CD4-positive, alpha-beta T cell (primary cell): ENCODE measurements at regions of chr2 and their contacts with region 1.

Region 1: DNA sequence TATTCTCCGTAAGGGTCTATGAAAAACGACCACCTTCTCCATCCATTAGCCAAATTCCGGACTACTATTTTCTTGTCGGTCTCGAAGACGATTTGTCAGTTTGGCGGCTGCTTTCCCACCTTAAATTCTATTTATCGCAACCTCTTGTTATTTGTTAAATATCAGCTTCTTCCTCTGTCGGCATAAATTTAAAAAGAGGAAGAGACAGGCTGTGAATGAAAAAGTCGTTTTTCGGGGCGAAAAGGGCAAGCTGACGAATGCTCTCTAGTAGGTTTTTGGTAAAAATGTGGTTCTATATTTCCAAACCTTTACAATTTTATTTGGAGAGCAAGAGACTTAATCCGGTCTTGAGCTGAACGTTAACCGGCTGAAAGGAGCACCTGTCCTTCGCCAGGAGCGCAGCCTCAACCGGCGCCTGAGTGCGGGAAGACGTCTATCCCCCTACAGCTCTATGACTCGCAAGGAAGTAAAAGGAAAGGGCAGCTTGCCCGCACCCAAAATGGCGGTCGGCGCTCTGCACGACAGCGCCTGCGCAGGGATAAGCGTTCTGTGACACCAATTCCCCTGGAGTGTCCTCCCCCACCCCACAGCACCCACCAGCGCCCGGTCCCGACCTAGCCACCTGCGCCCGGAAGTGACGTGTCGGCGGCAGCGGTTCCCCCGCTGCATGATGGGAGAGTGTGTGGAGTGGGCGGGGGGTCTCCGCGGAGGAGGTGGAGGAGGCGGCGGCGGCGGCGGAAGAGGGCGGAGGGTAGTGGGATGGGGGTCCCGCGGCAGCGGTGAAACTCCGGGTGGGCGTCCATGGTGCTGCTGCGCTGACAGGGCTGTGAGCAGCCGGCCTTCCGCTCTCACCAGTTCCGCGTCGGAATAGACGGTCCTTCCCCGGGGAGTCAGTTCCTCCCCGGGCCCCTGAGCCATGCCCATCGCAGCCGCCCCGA is at the start of gene AFTPH:
- DNase-seq: peak; percentile 98 to 100 (median 99)
- ATAC-seq: peak; percentile 90
- H3K4me3 ChIP-seq: peak within 1 kb of the TSS; percentile 89
- H3K4me3 Mint-ChIP-seq: peak within 1 kb of the TSS; percentile 100
- H3K27ac ChIP-seq: peak within 1 kb of the TSS; percentile 72 to 95
- H3K27ac Mint-ChIP-seq: peak within 1 kb of the TSS; percentile 99
- H3K4me1 ChIP-seq: peaks cover 16% of the 10 kb centered on the region
- H3K4me1 Mint-ChIP-seq: peaks cover 47% of the 10 kb centered on the region
- H3K27me3 ChIP-seq: no peaks in the 10 kb centered on the region
- H3K27me3 Mint-ChIP-seq: no peaks in the 10 kb centered on the region
- CTCF ChIP-seq: no peak
- total RNA-seq, gene AFTPH: 24.2 to 24.3 TPM

Region 2: DNA sequence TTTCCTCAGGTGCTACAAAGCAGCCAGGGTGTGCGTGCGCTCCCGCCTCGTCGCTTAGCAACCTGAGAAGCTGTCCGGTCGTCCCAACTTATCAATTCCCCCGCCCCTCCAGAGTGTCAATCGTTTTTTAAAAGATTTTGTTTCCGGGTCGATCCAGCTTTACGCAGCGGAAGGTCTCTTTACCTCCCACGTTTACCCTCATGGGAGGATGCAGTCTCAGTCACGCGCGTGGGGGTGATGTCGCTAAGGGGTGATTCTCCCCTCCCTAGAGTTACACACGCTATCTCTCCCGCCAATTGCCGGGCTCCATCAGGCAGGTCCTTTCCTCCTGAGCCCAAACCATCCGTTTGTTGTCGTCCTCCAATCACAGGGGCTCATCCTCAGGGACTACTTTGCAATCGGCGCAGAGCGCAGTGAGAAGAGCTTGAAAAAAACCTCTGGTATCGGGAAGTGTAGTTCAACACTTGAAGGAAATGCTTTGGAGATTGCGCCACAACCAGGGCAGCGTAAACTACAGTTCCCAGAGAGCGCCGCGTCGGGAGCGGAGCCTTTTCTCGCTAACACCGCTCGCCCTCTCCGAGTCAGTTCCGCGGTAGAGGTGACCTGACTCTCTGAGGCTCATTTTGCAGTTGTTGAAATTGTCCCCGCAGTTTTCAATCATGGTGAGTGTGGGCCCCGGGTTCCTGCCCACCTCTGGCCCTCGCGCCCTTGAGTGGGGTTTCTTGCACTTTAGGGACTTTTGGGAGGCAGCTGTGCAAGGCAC is 935.4 kb before region 1 on chr2 and contains the starts of genes MDH1 and WDPCP:
- CTCF ChIA-PET with region 1: no interaction called
- POLR2A ChIA-PET with region 1: interaction called, 4 read pairs
- intact Hi-C with region 1: loop called in 1 of 2 experiments (anchors 5 kb)
- DNase-seq: peak; percentile 86 to 99 (median 88)
- ATAC-seq: peak; percentile 86
- H3K4me3 ChIP-seq: peak within 1 kb of the TSS; percentile 96
- H3K4me3 Mint-ChIP-seq: peak within 1 kb of the TSS; percentile 93
- H3K27ac ChIP-seq: peak within 1 kb of the TSS; percentile 76 to 95
- H3K27ac Mint-ChIP-seq: peak within 1 kb of the TSS; percentile 87
- H3K4me1 ChIP-seq: peaks cover 19% of the 10 kb centered on the region
- H3K4me1 Mint-ChIP-seq: peaks cover 58% of the 10 kb centered on the region
- H3K27me3 ChIP-seq: no peaks in the 10 kb centered on the region
- H3K27me3 Mint-ChIP-seq: no peaks in the 10 kb centered on the region
- CTCF ChIP-seq: no peak
- total RNA-seq, gene MDH1: 96.3 to 97.6 TPM
- total RNA-seq, gene WDPCP: 8.7 to 9.9 TPM

Region 3: DNA sequence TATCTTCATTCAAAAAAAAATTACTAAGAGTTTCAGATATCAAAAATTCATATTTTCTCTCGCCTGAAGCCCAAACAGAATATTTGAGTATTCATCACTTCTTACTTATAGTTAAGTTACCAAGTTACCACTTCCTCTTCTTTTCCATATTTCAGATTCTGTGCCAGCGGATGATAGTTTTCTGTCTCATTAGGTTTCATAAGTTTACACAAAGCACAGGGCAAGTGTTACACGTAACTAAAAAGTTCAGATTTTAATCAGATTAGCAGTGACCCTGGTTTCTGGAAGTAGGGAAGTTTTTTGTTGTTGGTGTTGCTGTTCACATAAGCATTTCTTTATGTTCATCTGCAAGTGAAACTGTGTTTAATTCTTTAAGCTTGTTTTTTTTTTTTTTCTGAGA is 10.4 kb after region 1 on chr2:
- CTCF ChIA-PET with region 1: interaction called, 13 read pairs
- POLR2A ChIA-PET with region 1: interaction called, 21 read pairs
- intact Hi-C with region 1: no loop called
- DNase-seq: peak in 3 of 14 experiments; percentile 18 to 20 (median 20)
- ATAC-seq: no peak
- H3K4me3 ChIP-seq: no peak overlapping the region
- H3K4me3 Mint-ChIP-seq: peak overlapping the region; percentile 4
- H3K27ac ChIP-seq: no peak overlapping the region
- H3K27ac Mint-ChIP-seq: no peak overlapping the region
- H3K4me1 ChIP-seq: peaks cover 11% of the 10 kb centered on the region
- H3K4me1 Mint-ChIP-seq: peaks cover 75% of the 10 kb centered on the region
- H3K27me3 ChIP-seq: no peaks in the 10 kb centered on the region
- H3K27me3 Mint-ChIP-seq: no peaks in the 10 kb centered on the region
- CTCF ChIP-seq: no peak

Region 4: DNA sequence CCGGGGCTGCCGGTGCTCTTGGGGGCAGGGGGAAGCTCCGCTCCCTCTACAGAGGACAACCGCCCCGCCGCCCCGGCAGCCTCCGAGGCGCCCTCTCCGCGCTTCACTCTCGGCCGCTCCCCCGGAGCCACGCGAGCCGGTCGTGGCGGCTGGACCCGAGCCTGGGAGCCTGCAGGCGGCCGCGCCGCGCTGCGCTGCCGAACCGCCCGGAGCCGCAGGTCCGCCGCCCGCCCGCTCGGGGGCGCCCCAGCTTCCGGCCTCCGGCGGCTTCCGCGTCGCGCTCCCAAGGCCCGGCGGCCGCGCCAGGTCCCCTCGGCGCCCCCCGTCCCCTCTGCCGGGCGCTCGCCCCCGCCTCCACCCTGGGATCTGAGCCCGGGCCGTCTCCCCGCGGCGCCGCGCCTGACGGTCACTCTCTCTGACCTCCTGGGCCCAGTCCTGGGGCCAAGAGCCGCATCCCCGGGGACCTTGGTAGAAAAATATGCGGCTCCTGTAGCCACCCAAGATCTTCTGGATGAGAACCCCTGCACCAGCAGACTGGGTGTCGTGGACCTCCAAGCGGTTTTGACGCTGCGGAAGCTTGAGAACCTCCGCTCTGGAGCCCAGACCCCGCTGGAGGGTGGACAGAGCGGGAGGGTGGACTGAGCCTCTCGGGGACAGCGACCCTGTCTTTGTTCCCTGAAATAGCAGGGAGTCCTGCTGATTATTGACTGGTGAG is 85.4 kb after region 1 on chr2:
- CTCF ChIA-PET with region 1: interaction called, 4 read pairs
- POLR2A ChIA-PET with region 1: interaction called, 32 read pairs
- intact Hi-C with region 1: no loop called
- DNase-seq: peak; percentile 38 to 89 (median 64)
- ATAC-seq: peak; percentile 64
- H3K4me3 ChIP-seq: peak overlapping the region; percentile 66
- H3K4me3 Mint-ChIP-seq: peak overlapping the region; percentile 89
- H3K27ac ChIP-seq: no peak overlapping the region
- H3K27ac Mint-ChIP-seq: peak overlapping the region; percentile 72
- H3K4me1 ChIP-seq: peaks cover 41% of the 10 kb centered on the region
- H3K4me1 Mint-ChIP-seq: peaks cover 26% of the 10 kb centered on the region
- H3K27me3 ChIP-seq: no peaks in the 10 kb centered on the region
- H3K27me3 Mint-ChIP-seq: no peaks in the 10 kb centered on the region
- CTCF ChIP-seq: no peak

Region 5: GRCh38 chr2:64750817-64751285 is 226.9 kb after region 1 on chr2:
- CTCF ChIA-PET with region 1: no interaction called
- POLR2A ChIA-PET with region 1: interaction called, 38 read pairs
- intact Hi-C with region 1: loop called (anchors 1 to 2 kb)
- DNase-seq: peak; percentile 92 to 100 (median 96)
- ATAC-seq: peak; percentile 83
- H3K4me3 ChIP-seq: peak overlapping the region; percentile 96
- H3K4me3 Mint-ChIP-seq: peak overlapping the region; percentile 95
- H3K27ac ChIP-seq: peak overlapping the region; percentile 81 to 91
- H3K27ac Mint-ChIP-seq: peak overlapping the region; percentile 92
- H3K4me1 ChIP-seq: peaks cover 16% of the 10 kb centered on the region
- H3K4me1 Mint-ChIP-seq: peaks cover 34% of the 10 kb centered on the region
- H3K27me3 ChIP-seq: no peaks in the 10 kb centered on the region
- H3K27me3 Mint-ChIP-seq: no peaks in the 10 kb centered on the region
- CTCF ChIP-seq: no peak

Region 6: DNA sequence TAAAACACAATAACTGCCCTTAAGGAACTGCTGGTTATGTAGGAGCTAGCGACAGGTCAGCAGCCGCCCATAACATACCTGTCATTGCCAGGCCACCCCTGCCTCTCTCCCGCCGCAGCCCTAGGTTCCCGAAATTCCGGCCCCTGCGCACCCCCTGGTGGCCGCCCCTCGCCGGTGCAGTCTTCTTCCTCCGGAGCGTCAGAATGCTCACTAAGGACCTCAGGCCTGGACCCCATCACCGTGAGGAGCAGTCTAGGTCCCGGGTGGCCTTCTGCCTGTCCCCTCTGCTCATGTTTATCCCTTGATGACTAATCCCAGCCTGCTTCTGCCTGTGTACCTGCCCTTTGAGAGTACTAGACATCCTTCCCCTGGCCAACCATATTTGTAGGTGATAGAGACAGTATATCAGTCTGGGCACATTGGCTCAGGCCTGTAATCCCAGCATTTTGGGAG is 349.6 kb after region 1 on chr2:
- CTCF ChIA-PET with region 1: interaction called, 3 read pairs
- POLR2A ChIA-PET with region 1: interaction called, 7 read pairs
- intact Hi-C with region 1: loop called (anchors 1 to 2 kb)
- DNase-seq: peak; percentile 53 to 86 (median 74)
- ATAC-seq: peak; percentile 98
- H3K4me3 ChIP-seq: peak overlapping the region; percentile 24
- H3K4me3 Mint-ChIP-seq: peak overlapping the region; percentile 4
- H3K27ac ChIP-seq: no peak overlapping the region
- H3K27ac Mint-ChIP-seq: no peak overlapping the region
- H3K4me1 ChIP-seq: peaks cover 9% of the 10 kb centered on the region
- H3K4me1 Mint-ChIP-seq: peaks cover 7% of the 10 kb centered on the region
- H3K27me3 ChIP-seq: no peaks in the 10 kb centered on the region
- H3K27me3 Mint-ChIP-seq: no peaks in the 10 kb centered on the region
- CTCF ChIP-seq: peak; percentile 96

Region 7: DNA sequence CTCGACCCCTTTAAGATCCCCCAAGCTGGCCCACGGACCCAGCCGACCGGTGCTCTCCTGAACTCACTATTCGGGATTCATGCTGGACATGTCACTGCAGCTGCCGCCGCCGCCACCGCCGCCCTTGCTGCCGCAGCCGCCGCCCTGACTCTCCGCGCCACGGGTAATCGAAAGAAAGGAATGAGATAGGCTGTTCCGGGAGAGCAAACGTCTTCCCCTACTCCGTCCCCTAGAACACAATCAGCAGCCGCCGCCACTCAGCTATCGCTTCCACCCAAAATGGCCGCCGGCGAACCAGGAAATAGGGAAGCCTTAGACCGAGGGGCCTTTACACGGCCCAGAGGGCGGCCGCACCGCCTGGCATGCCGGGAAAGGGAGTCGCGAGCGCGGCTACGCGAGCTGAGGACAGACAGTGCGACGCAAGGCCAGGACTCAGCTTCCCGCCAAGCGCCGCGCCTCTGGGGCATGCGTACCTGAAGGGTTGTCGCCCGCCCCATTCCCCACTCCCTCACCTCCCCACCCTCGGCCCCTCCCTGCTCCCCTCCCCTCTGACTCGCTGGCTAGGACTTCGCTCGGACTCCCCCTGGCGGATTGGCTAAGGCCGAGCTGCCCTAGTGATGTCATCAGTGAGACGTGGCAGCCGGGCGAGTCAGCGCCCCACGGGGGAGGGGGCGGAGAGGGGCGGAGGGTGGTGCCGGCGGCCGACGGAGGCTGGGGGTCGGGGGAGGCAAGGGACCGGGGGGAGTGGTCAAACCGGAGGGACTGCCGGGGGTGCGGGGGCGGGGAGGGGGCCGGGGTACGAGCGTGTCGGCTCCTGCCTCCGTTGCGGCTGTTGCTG is 606.1 kb after region 1 on chr2 and contains the start of gene RAB1A:
- CTCF ChIA-PET with region 1: no interaction called
- POLR2A ChIA-PET with region 1: interaction called, 10 read pairs
- intact Hi-C with region 1: loop called in 1 of 2 experiments (anchors 5 kb)
- DNase-seq: peak; percentile 98 to 100 (median 99)
- ATAC-seq: peak; percentile 89
- H3K4me3 ChIP-seq: peak within 1 kb of the TSS; percentile 80
- H3K4me3 Mint-ChIP-seq: peak within 1 kb of the TSS; percentile 100
- H3K27ac ChIP-seq: peak within 1 kb of the TSS; percentile 95
- H3K27ac Mint-ChIP-seq: peak within 1 kb of the TSS; percentile 98
- H3K4me1 ChIP-seq: peaks cover 30% of the 10 kb centered on the region
- H3K4me1 Mint-ChIP-seq: peaks cover 45% of the 10 kb centered on the region
- H3K27me3 ChIP-seq: no peaks in the 10 kb centered on the region
- H3K27me3 Mint-ChIP-seq: no peaks in the 10 kb centered on the region
- CTCF ChIP-seq: peak; percentile 37
- total RNA-seq, gene RAB1A: 85.3 to 87.6 TPM